ENCODE measurements at regions of chr16 and their contacts with region 1.

Region 1: GRCh38 chr16:24151482-24151939 is 104.6 kb upstream of the CACNG3 start:
- DNase-seq: no peak
- H3K4me3 Mint-ChIP-seq: no peak overlapping the region
- H3K27ac Mint-ChIP-seq: peak overlapping the region; percentile 77
- H3K4me1 Mint-ChIP-seq: peaks cover 21% of the 10 kb centered on the region
- H3K27me3 Mint-ChIP-seq: no peaks in the 10 kb centered on the region

Region 2: GRCh38 chr16:24139282-24139681 is 12.2 kb before region 1 on chr16:
- intact Hi-C with region 1: loop called (anchors 1 kb)
- DNase-seq: no peak
- H3K4me3 Mint-ChIP-seq: no peak overlapping the region
- H3K27ac Mint-ChIP-seq: peak overlapping the region; percentile 40
- H3K4me1 Mint-ChIP-seq: peaks cover 18% of the 10 kb centered on the region
- H3K27me3 Mint-ChIP-seq: no peaks in the 10 kb centered on the region

Measured in activated T-helper 2 cell treated with anti-CD3 and anti-CD28 coated beads, Interferon-gamma antibody, Interleukin-2, Interleukin-4, amounts not matched to agents 10 μg/mL and 5 μg/mL and 100 μg/mL, durations not matched to agents 14 hours and 24 hours and 36 hours (primary cell).